Left colon (tissue), 2 donors: ENCODE measurements at regions of chr2 and their contacts with region 1.

Region 1: DNA sequence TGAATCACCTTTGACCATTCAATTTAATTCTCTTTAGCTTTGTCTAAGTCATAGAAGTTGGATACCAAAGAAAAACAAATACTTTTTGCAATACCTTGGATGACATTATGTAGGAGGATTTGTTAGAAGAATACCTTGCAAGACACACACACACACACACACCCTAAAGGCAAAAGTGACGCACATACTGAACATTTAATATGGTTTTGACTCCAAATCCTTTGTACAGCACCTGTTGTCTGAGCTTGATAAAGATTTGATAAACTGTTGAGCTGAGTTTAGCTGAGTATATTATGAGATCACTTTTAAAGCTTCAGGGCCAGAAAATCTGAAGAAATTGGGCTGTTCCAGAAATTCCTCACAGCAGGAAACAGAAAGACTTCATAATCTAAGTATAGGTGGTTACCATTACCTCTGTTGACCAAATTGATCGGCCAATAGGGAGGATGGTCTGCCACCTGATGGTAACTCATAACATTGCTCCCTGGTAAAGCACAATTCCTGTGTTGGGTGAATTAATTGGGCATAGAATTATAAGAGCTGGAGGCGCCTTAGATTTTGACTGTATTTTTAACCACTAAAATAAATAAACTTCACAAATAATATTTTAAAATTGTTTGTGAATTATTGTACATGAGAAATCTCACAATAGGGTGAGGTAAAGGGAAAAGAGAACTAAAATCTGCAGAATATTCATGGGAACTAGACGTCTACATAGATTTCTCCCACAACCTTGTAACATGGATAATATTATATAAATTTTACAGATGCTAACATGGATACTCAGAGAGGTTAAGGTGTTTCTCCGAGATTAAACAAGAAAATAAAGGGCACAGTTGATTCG is 21.9 kb upstream of the RPIA start:
- DNase-seq: peak in 1 of 2 donors; percentile 11
- ATAC-seq: peak; percentile 86

Region 2: DNA sequence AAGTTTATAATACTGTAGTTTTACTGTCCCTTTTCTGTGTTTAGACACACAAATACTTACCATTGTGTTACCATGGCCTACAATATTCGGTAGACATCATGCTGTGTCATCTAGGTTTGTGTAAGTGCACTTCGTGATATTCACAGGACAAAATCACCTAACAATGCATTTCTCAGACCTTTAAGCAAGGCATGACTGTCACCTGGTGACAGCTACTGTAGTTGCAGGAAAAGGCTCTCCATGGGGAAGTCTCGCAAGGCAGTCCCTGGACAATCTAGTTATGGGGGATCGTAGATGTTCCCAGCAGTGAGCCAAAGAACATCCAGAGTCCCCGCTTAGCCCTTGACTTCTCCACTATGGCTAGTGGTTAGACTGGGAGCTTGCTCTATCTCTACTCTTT is 115.4 kb before region 1 on chr2:
- intact Hi-C with region 1: no loop called
- DNase-seq: no peak
- ATAC-seq: no peak

Region 3: GRCh38 chr2:88590998-88591613 is 78.5 kb before region 1 on chr2:
- intact Hi-C with region 1: loop called in 1 of 2 experiments (anchors 2 kb)
- DNase-seq: peak in 1 of 2 donors; percentile 19
- ATAC-seq: peak; percentile 89

Region 4: DNA sequence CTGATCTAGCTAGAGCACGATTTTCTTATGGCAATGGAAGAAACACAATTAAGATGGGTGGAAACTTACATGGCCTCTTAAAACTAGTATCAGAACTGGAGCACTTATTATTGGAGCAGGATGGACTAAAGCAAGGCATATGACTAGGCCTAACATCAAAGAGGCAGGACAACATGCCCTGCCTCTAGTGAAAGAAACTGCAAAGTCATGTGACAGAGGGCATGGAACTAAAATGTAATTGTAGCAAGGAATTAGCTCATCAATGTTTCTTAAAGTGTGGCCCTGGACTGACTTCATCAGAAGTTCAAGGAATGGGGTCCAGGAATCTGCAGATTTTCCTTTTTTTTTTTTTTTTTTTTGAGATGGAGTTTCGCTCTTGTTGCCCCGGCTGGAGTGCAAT is 37.0 kb before region 1 on chr2:
- intact Hi-C with region 1: loop called in 1 of 2 experiments (anchors 5 kb)
- DNase-seq: no peak
- ATAC-seq: no peak